ENCODE measurements at regions of chr14 and their contacts with region 1.

Region 1: DNA sequence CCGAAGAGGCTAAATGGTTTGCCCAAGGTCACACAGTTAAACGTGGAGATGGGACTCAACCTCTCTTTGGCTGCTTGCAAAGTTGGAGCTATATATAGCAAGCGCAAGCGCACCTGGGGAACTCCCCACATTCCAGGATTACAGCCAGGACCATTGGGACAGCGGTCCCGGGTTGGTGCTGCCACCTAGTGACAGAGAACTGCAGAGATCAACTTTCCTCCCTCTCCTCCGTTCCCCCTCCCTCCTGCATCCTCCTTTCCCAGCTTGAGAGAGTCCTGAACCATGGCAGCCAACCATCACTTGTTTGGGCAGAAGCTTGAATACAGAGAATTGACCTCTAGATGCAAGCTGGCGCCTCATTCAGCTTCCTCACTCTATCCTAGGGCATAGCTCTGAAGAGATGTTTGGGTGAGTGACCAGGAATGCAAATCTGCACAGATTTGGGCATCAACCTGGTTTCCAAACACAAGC is 17.4 kb upstream of the FLVCR2 start:
- DNase-seq: peak; percentile 87 to 90
- ATAC-seq: peak; percentile 90 to 94
- H3K4me3 ChIP-seq: 0 out of 3 replicates have a peak overlapping the region, but pooled peaks have one; percentile 9
- H3K27ac ChIP-seq: peak overlapping the region; percentile 84 to 90
- H3K4me1 ChIP-seq: peaks cover 27% of the 10 kb centered on the region
- CTCF ChIP-seq: peak; percentile 93
- EP300 ChIP-seq: 0 out of 5 replicates have a peak, but pooled peaks of 1 of the 2 experiments have one; percentile 24
- POLR2A ChIP-seq: no peak
- RAD21 ChIP-seq: peak; percentile 97 to 98

Region 2: DNA sequence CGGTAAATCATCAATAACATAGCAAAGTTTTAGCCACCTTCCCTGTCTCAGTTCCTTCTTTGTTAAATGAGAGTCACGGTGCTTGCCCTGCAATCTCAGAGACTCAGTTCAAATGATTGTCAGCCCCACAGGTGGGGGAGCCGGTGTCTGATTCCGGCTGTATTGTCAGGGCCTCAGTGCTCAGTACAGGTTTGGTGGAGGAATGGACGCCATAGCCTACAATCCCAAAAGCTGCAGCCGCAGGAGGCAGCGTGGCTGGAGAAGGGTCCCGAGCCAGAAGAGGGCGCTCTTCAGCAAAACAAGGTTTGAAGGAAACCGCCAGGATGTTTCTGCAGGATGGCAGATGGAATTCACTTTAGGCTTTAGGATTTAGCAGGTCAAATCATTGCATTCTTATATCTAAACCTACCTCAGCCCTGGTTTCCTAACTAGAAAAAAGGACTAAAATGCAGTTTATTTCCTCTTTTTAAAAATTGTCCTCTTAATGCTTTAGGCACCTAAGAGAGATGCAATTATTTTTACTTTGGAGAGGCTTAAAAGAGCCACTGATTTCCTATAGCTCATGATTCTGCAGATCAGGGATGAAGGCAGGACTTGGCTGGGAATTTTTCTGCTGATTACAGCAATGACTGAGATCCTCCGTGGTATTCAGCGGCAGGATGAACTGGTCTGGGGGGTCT is 253.2 kb before region 1 on chr14:
- CTCF ChIA-PET with region 1: interaction called, 197 read pairs
- POLR2A ChIA-PET with region 1: no interaction called
- DNase-seq: peak; percentile 64 to 85
- ATAC-seq: peak; percentile 89 to 91
- H3K4me3 ChIP-seq: no peak overlapping the region
- H3K27ac ChIP-seq: peak overlapping the region; percentile 51 to 66; a peak in 4 of 6 replicates
- H3K4me1 ChIP-seq: peaks cover 29% of the 10 kb centered on the region
- CTCF ChIP-seq: peak; percentile 95
- EP300 ChIP-seq: no peak
- POLR2A ChIP-seq: no peak
- RAD21 ChIP-seq: peak; percentile 95

Region 3: GRCh38 chr14:75427482-75428229 is 133.3 kb before region 1 on chr14 and contains the start of gene JDP2:
- CTCF ChIA-PET with region 1: interaction called, 24 read pairs
- POLR2A ChIA-PET with region 1: interaction called, 4 read pairs
- DNase-seq: peak; percentile 64 to 80
- ATAC-seq: peak; percentile 83 to 92
- H3K4me3 ChIP-seq: peak within 1 kb of the TSS; percentile 83
- H3K27ac ChIP-seq: peak within 1 kb of the TSS; percentile 94 to 99
- H3K4me1 ChIP-seq: peaks cover 43% of the 10 kb centered on the region
- CTCF ChIP-seq: no peak
- EP300 ChIP-seq: peak; percentile 29 to 59; a peak in 1 of 5 replicates
- POLR2A ChIP-seq: peak; percentile 37; the same call in 1 of the 2 replicates
- RAD21 ChIP-seq: 0 out of 5 replicates have a peak, but pooled peaks of 1 of the 2 experiments have one; percentile 19
- polyA plus RNA-seq, gene JDP2: 17.2 and 31.2 TPM in 2 replicates

Region 4: GRCh38 chr14:75497191-75497590 is 63.8 kb before region 1 on chr14:
- CTCF ChIA-PET with region 1: interaction called, 171 read pairs
- POLR2A ChIA-PET with region 1: no interaction called
- DNase-seq: no peak
- ATAC-seq: no peak
- H3K4me3 ChIP-seq: no peak overlapping the region
- H3K27ac ChIP-seq: no peak overlapping the region
- H3K4me1 ChIP-seq: peaks cover 13% of the 10 kb centered on the region; the same call in 2 of the 3 replicates
- CTCF ChIP-seq: no peak
- EP300 ChIP-seq: no peak
- POLR2A ChIP-seq: no peak
- RAD21 ChIP-seq: no peak

Region 5: DNA sequence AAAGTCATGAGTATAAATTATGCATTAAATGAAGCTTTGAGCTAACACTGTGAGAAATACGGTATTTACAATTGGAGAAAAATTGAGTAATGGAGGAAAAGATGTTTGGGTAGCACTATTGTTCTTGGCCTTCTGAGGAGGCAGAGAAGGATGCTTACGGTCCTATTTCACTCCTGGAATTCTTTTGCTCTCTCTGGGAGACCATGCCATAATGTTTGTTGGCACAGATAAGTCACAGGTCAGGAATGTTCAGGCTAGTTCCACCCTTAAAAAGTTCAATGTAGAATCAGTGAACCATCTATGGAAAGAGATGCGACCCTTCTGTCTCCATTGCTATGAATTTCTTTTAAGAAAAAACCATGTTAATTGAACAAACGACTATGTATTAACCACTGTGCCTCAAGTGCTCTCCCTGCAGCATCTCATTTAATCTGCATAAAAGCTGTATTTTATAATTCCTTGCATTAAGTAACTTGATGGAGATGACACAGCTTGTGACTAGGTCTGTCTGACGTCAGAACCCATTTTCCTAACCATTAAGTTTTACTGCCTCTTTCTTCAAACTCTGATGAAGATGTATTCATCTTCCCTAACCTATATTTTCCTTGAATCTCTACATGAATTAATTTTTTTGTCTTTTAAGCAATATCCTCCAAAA is 29.2 kb before region 1 on chr14:
- CTCF ChIA-PET with region 1: interaction called, 50 read pairs
- POLR2A ChIA-PET with region 1: interaction called, 3 read pairs
- DNase-seq: peak; percentile 41 to 92
- ATAC-seq: peak; percentile 76 to 77
- H3K4me3 ChIP-seq: no peak overlapping the region
- H3K27ac ChIP-seq: peak overlapping the region; percentile 93 to 96
- H3K4me1 ChIP-seq: peaks cover 55% of the 10 kb centered on the region
- CTCF ChIP-seq: no peak
- EP300 ChIP-seq: peak; percentile 92 to 96; a peak in 4 of 5 replicates
- POLR2A ChIP-seq: no peak
- RAD21 ChIP-seq: peak in 1 of 2 experiments; percentile 47; a peak in 2 of 5 replicates

Region 6: DNA sequence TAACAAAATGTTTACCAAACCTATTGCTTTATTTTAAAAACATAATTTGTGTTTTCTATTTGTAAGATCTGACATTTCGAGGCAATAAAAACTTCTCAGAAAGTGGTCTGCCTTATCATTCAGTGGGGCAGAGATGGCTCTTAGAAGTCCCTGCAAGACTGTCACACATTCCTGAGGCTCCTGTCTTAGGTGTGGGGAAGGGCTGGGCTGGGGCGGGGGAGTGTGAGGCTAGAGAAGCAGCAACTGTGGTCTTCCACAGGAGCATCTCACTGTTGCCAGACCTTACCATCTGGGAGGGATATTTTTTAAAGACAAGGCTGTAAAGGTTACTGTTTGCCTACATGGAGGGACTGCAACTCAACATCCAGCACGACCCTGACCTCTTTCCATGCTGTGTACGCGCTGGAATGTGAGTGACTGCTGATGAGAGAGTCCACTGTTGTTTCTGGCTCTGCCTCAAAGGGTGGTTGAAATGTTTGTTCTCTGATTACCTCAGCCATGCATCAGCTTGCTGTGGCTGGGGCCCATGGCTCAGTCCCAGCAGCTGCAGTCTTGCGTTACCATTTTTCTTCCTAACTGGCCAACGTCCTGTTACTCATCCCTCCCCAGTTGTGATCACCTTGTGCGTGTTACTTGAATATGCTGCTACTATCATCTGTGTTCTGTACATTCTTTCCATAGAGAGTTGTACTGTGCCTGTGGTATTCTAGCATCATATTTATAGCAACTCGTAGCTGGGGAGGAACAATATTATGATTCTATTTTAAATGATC is 87.3 kb after region 1 on chr14:
- CTCF ChIA-PET with region 1: interaction called, 41 read pairs
- POLR2A ChIA-PET with region 1: interaction called, 3 read pairs
- DNase-seq: peak; percentile 64 to 82
- ATAC-seq: peak; percentile 92 to 93
- H3K4me3 ChIP-seq: no peak overlapping the region
- H3K27ac ChIP-seq: peak overlapping the region; percentile 73 to 84
- H3K4me1 ChIP-seq: peaks cover 60% of the 10 kb centered on the region
- CTCF ChIP-seq: no peak
- EP300 ChIP-seq: peak; percentile 57 to 86; a peak in 3 of 5 replicates
- POLR2A ChIP-seq: no peak
- RAD21 ChIP-seq: no peak; a peak in 2 of 5 replicates

Region 7: GRCh38 chr14:75720842-75721498 is 160.0 kb after region 1 on chr14:
- CTCF ChIA-PET with region 1: no interaction called
- POLR2A ChIA-PET with region 1: no interaction called
- DNase-seq: no peak
- ATAC-seq: no peak
- H3K4me3 ChIP-seq: no peak overlapping the region
- H3K27ac ChIP-seq: no peak overlapping the region
- H3K4me1 ChIP-seq: peaks cover 7% of the 10 kb centered on the region
- CTCF ChIP-seq: no peak
- EP300 ChIP-seq: no peak
- POLR2A ChIP-seq: no peak
- RAD21 ChIP-seq: no peak

Region 8: DNA sequence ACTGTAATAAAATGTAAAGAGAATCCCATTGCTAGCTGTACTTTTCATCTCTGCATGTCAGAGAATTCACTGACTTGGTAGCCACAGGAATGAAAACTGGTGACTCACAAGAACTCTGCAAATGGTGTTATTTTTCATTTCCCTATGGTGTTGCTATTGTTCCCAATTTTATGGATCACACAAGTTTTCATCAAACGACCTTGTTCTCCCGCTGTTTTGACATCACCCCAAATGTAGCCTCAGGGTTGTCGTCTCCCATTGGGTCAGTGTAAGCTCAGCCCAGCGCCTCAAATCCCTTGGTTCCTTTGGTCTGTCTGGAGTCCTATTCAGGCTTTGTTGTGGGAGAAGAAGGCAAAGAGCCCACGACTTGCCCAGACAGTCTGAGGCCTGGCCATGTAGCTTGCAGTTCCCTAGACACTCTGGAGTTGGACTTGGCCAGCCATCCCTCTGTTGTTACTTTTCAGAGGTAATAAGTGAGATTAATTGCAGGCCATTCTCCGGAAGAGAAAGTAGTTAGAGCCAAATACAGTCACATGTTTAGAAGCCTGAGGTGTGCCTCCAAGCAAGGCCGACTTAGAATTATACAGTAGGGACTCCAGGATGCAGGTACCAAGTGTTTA is 261.6 kb after region 1 on chr14:
- CTCF ChIA-PET with region 1: no interaction called
- POLR2A ChIA-PET with region 1: no interaction called
- DNase-seq: no peak
- ATAC-seq: no peak
- H3K4me3 ChIP-seq: no peak overlapping the region
- H3K27ac ChIP-seq: no peak overlapping the region
- H3K4me1 ChIP-seq: no peaks in the 10 kb centered on the region
- CTCF ChIP-seq: no peak
- EP300 ChIP-seq: no peak
- POLR2A ChIP-seq: no peak
- RAD21 ChIP-seq: no peak

Region 9: DNA sequence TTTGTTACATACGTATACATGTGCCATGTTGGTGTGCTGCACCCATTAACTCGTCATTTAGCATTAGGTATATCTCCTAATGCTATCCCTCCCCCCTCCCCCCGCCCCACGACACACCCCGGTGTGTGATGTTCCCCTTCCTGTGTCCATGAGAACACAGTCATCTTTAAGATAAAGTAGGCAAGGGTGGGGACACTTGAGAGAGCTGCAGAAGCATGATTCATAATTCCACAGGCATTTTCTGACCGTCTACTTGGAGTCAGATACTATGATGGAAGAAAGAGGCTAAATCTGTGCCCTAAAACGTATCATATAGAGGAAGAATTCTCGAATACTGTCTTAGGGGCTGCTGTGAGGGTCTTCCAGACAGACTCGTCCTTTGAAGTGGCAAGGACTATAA is 1054.3 kb after region 1 on chr14:
- CTCF ChIA-PET with region 1: no interaction called
- POLR2A ChIA-PET with region 1: no interaction called
- DNase-seq: no peak
- ATAC-seq: no peak
- H3K4me3 ChIP-seq: no peak overlapping the region
- H3K27ac ChIP-seq: no peak overlapping the region
- H3K4me1 ChIP-seq: no peaks in the 10 kb centered on the region
- CTCF ChIP-seq: no peak
- EP300 ChIP-seq: no peak
- POLR2A ChIP-seq: no peak
- RAD21 ChIP-seq: no peak